Thyroid gland (tissue), 4 donors: ENCODE measurements at regions of chr20 and their contacts with region 1.

Region 1: GRCh38 chr20:49610701-49611538 is 43.0 kb upstream of the PTGIS start:
- DNase-seq: peak; percentile 72 to 74
- H3K4me3 ChIP-seq: no peak overlapping the region
- H3K27ac ChIP-seq: no peak overlapping the region
- H3K4me1 ChIP-seq: peaks cover 0 to 13% of the 10 kb centered on the region in 2 donors
- H3K27me3 ChIP-seq: no peaks in the 10 kb centered on the region
- CTCF ChIP-seq: peak; percentile 93 to 100 (median 99)
- POLR2A ChIP-seq: no peak

Region 2: GRCh38 chr20:49534255-49534712 is 76.6 kb before region 1 on chr20:
- intact Hi-C with region 1: no loop called
- DNase-seq: peak; percentile 38 to 46
- H3K4me3 ChIP-seq: no peak overlapping the region
- H3K27ac ChIP-seq: no peak overlapping the region
- H3K4me1 ChIP-seq: no peaks in the 10 kb centered on the region
- H3K27me3 ChIP-seq: no peaks in the 10 kb centered on the region
- CTCF ChIP-seq: peak; percentile 51 to 85 (median 73)
- POLR2A ChIP-seq: no peak

Region 3: GRCh38 chr20:49549811-49550551 is 60.9 kb before region 1 on chr20:
- intact Hi-C with region 1: no loop called
- DNase-seq: no peak
- H3K4me3 ChIP-seq: no peak overlapping the region
- H3K27ac ChIP-seq: no peak overlapping the region
- H3K4me1 ChIP-seq: peaks cover 11 to 13% of the 10 kb centered on the region in 2 donors
- H3K27me3 ChIP-seq: no peaks in the 10 kb centered on the region
- CTCF ChIP-seq: no peak
- POLR2A ChIP-seq: no peak

Region 4: GRCh38 chr20:49846206-49846807 is 235.4 kb after region 1 on chr20:
- intact Hi-C with region 1: loop called (anchors 2 kb)
- DNase-seq: peak in 1 of 2 donors; percentile 50
- H3K4me3 ChIP-seq: no peak overlapping the region
- H3K27ac ChIP-seq: no peak overlapping the region
- H3K4me1 ChIP-seq: peaks cover 0 to 14% of the 10 kb centered on the region in 2 donors
- H3K27me3 ChIP-seq: no peaks in the 10 kb centered on the region
- CTCF ChIP-seq: peak in 5 of 6 experiments; percentile 27 to 65 (median 56)
- POLR2A ChIP-seq: no peak

Region 5: DNA sequence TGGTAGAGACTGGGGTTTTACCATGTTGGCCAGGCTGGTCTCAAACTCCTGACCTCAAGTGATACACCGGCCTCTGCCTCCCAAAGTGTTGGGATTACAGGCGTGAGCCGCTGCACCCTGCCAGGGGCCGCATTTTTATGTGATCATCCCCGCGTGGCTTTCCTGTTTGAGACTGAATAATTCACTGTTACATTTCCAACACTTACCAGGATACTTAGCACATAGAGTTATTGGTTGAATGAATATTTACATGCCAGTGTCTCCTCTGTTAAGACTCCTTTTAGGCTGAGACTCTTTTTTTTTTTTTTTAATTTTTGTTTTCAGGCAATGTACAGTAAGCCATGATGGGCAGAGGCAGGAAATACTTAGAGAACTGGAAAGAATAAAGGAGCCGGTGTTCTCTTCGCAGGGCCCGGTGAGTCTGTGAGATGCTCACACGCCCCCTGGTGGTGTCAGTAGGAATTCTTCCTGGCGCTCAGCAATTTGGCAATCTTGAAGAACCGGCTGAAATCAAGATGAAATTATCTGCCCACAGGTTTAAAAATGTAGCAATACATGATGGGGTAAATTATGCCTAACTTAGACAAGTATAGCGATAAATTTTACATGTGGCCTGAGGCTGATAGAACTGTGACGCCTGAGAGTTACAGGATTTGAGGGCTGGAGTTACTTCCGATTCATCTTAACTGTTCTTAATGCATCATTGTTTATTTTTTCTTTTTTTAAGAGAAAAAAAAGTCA is 317.7 kb after region 1 on chr20:
- intact Hi-C with region 1: loop called (anchors 5 kb)
- DNase-seq: peak; percentile 84 to 88
- H3K4me3 ChIP-seq: no peak overlapping the region
- H3K27ac ChIP-seq: no peak overlapping the region
- H3K4me1 ChIP-seq: no peaks in the 10 kb centered on the region
- H3K27me3 ChIP-seq: no peaks in the 10 kb centered on the region
- CTCF ChIP-seq: peak; percentile 74 to 96 (median 88)
- POLR2A ChIP-seq: no peak